Activated naive CD8-positive, alpha-beta T cell treated with anti-CD3 and anti-CD28 coated beads, Interleukin-2, amount 10 ng/mL, durations not matched to agents 7 days and 5 days (primary cell): ENCODE measurements at regions of chr20 and their contacts with region 1.

Region 1: DNA sequence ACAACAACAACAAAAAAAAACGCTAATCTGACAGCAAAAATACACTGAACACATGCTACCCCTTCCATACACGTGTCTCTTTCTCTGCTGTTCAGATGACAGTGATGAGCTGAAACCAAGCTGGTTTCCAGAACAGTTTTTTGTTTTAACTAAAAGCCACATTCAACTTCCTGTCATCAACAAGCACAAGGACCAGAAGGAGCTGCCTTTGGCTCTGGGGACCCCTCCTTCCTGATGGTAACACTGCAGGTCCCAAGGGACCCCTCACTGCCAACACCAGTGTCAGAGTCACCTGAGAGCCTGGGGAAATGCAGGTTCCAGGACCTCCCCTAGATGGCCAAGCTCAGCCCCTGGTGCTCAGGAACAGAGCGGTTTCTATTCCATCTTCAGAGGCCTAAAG is 6.0 kb downstream of the CST7 start:
- DNase-seq: peak; percentile 45
- ATAC-seq: peak; percentile 74
- H3K4me3 Mint-ChIP-seq: peak overlapping the region; percentile 57
- H3K27ac Mint-ChIP-seq: peak overlapping the region; percentile 80
- H3K4me1 Mint-ChIP-seq: peaks cover 34% of the 10 kb centered on the region
- H3K27me3 Mint-ChIP-seq: no peaks in the 10 kb centered on the region

Region 2: GRCh38 chr20:24992487-24993205 is 37.6 kb after region 1 on chr20 and contains the start of gene APMAP:
- POLR2A ChIA-PET with region 1: interaction called, 13 read pairs
- DNase-seq: peak; percentile 98
- ATAC-seq: peak; percentile 92
- H3K4me3 Mint-ChIP-seq: peak within 1 kb of the TSS; percentile 97
- H3K27ac Mint-ChIP-seq: peak within 1 kb of the TSS; percentile 95
- H3K4me1 Mint-ChIP-seq: peaks cover 43% of the 10 kb centered on the region
- H3K27me3 Mint-ChIP-seq: peaks cover 5% of the 10 kb centered on the region
- total RNA-seq, gene APMAP: 60.7 to 64.6 TPM